Left colon (tissue), 2 donors: ENCODE measurements at regions of chr3 and their contacts with region 1.

Region 1: GRCh38 chr3:113148286-113148685 is 63.1 kb upstream of the BOC start:
- DNase-seq: peak in 1 of 2 donors; percentile 42
- ATAC-seq: peak; percentile 94

Region 2: GRCh38 chr3:113211330-113212149 is 63.3 kb after region 1 on chr3 and contains the start of gene BOC:
- intact Hi-C with region 1: no loop called
- DNase-seq: no peak
- ATAC-seq: peak; percentile 40
- total RNA-seq, gene BOC: 4.2 to 10.6 TPM

Region 3: DNA sequence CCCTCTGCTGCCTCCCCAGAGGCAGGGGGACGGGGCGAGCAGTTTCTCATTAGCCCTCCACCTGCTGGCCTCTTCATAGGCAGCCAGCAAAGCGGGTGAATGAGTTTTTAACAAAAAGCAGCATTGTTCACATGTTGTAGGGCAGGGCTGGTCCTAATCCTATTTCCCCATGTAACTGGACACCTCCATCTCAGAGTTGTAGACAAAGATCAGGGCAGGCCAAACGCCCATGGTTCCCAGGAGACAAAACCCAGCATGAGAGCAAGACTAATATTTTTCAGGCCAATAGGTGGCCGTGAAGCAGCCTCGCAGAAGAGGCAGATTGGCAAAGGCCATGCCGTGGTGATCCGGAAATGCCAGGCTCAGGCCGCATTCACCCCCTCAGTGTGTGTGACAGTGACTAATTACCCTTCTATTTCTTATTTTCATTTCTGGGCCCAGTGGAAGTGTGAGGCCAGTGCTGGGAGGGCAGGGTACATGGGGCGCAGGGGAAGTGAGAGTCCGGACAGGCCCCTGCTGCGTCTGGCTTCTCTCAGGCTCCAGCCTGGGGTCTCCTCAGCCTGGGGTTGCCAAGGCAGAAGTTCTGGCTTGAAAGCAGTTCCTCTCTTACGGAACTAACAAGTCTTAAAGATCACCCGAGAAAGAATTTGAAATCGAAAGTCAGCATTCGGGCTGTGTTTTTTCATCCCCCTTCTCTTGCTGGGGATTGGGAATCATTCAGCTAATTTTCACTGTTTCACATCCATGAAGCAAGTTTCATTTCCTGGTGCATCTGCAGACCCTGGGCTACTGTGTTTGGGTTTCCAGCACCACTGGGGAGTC is 127.9 kb after region 1 on chr3:
- intact Hi-C with region 1: loop called in 1 of 2 experiments (anchors 5 kb)
- DNase-seq: no peak
- ATAC-seq: peak; percentile 29

Region 4: DNA sequence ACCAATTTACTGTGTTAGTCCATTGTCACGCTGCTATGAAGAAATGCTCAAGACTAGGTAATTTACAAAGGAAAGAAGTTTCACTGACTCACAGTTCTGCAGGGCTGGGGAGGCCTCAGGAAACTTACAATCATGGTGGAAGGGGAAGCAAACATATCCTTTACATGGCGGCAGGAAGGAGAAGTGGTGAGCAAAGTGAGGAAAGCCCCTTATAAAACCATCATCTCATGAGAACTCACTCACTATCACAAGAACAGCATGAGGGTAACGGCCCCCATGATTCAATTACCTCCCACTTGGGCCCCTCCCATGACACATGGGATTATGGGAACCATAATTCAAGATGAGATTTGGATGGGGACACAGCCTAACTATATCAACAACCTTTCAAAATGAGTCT is 528.0 kb after region 1 on chr3:
- intact Hi-C with region 1: no loop called
- DNase-seq: no peak
- ATAC-seq: no peak